ENCODE measurements at regions of chr20 and their contacts with region 1.

Region 1: DNA sequence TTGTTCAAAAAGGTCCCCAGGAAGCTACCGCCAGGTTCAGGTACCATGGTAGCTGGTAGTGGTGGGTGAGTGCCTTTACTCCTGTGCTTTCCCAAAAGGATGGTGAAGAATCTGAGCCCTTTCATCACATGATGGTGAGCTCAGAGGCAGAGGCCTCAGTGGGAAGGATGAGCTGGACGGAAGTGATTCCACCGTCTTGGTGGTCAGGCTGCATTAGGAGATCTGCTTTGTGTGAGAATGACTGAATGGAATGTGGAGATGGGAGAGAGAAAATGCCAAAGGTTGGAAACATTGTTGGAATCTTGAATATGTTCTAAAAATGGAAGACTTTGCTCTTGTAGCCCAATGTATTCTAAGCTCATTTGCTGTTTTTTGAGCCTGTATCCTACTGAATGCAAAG is 108.1 kb upstream of the SCP2D1 start:
- DNase-seq: no peak
- H3K4me3 ChIP-seq: no peak overlapping the region
- H3K27ac ChIP-seq: no peak overlapping the region
- H3K4me1 ChIP-seq: peaks cover 13% of the 10 kb centered on the region
- H3K27me3 ChIP-seq: no peaks in the 10 kb centered on the region
- CTCF ChIP-seq: no peak

Region 2: GRCh38 chr20:18767676-18768075 is 62.2 kb after region 1 on chr20:
- intact Hi-C with region 1: loop called (anchors 10 kb)
- DNase-seq: no peak
- H3K4me3 ChIP-seq: no peak overlapping the region
- H3K27ac ChIP-seq: no peak overlapping the region
- H3K4me1 ChIP-seq: no peaks in the 10 kb centered on the region
- H3K27me3 ChIP-seq: no peaks in the 10 kb centered on the region
- CTCF ChIP-seq: no peak

Region 3: DNA sequence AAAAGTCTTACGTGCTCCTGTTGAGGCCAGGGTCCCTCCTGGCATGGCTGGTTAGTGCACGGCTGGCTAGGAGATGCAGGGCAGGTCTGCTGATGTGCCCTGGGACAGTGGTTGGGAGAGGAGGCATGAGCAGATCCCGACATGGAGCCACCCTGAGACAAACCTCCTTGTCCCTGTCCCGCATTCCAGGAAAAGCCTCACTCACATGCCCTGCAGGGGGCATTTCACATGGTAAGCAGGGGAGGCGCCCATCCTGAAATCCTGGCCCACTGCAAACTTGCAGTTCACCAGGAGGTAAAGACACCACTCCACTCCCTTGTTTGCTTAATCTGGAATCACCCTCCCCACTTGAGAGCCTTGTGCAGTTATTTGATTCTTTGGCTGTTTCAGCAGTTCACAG is 390.3 kb after region 1 on chr20:
- intact Hi-C with region 1: no loop called
- DNase-seq: no peak
- H3K4me3 ChIP-seq: no peak overlapping the region
- H3K27ac ChIP-seq: no peak overlapping the region
- H3K4me1 ChIP-seq: no peaks in the 10 kb centered on the region
- H3K27me3 ChIP-seq: no peaks in the 10 kb centered on the region
- CTCF ChIP-seq: no peak